ENCODE measurements at regions of chr15 and their contacts with region 1.

Region 1: GRCh38 chr15:83848315-83849050 is 194.6 kb downstream of the ADAMTSL3 start:
- DNase-seq: peak; percentile 84
- H3K4me3 Mint-ChIP-seq: no peak overlapping the region
- H3K27ac Mint-ChIP-seq: peak overlapping the region; percentile 67
- H3K4me1 Mint-ChIP-seq: peaks cover 63% of the 10 kb centered on the region
- H3K27me3 Mint-ChIP-seq: no peaks in the 10 kb centered on the region
- CTCF ChIP-seq: no peak

Region 2: GRCh38 chr15:83764201-83764838 is 84.2 kb before region 1 on chr15:
- CTCF ChIA-PET with region 1: no interaction called
- POLR2A ChIA-PET with region 1: no interaction called
- intact Hi-C with region 1: no loop called
- DNase-seq: no peak
- H3K4me3 Mint-ChIP-seq: no peak overlapping the region
- H3K27ac Mint-ChIP-seq: no peak overlapping the region
- H3K4me1 Mint-ChIP-seq: no peaks in the 10 kb centered on the region
- H3K27me3 Mint-ChIP-seq: no peaks in the 10 kb centered on the region
- CTCF ChIP-seq: no peak

Region 3: DNA sequence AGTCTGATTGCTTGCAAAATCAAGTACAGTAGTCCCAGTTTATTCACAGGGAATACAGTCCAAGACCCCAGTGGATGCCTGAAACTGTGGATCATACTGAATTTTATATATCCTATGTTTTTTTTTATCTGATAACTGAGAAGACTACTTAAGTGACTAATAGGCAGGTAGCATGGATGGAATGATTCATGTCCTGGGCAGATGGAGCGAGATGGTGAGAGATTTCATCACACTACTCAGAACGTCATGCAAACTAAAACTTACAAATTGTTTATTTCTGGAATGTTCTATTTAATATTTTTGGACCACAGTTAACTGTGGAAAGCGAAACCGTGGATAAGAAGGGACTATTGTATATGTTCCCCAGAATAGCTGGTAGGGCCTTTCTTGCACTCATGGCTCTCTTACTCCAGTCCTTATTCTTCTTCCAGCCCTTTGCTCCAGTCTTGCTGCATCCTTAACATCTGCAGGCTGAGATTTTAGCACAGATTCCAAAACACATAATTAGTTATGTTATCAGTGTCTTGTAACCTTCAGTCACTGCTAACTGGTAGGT is 95.4 kb after region 1 on chr15:
- CTCF ChIA-PET with region 1: no interaction called
- POLR2A ChIA-PET with region 1: no interaction called
- intact Hi-C with region 1: loop called (anchors 5 kb)
- DNase-seq: peak; percentile 65
- H3K4me3 Mint-ChIP-seq: no peak overlapping the region
- H3K27ac Mint-ChIP-seq: no peak overlapping the region
- H3K4me1 Mint-ChIP-seq: peaks cover 16% of the 10 kb centered on the region
- H3K27me3 Mint-ChIP-seq: no peaks in the 10 kb centered on the region
- CTCF ChIP-seq: no peak